Posterior vena cava (tissue), 2 donors: ENCODE measurements at regions of chr3 and their contacts with region 1.

Region 1: GRCh38 chr3:150216041-150216811 is 191.9 kb upstream of the TSC22D2 start:
- DNase-seq: no peak

Region 2: DNA sequence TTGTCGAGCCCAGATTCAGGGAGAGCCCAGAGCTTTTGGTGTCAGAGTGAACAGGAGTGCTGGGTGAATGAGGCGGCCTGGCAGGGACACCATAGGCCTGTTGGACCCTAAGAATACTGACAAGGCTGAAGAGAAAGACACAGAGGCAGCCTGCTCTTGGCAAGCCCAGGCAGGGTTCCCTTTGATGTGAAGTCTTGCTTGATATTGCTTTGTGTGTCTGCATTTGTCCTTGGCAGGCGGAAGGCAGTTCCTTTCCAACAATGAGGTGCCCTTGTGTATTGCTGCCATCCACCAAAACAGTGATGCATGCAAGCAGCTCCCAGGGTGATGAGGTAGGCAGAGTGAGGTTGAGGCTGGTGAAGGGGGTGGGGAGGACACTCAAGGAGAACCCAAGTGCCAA is 39.2 kb after region 1 on chr3:
- intact Hi-C with region 1: no loop called
- DNase-seq: no peak

Region 3: DNA sequence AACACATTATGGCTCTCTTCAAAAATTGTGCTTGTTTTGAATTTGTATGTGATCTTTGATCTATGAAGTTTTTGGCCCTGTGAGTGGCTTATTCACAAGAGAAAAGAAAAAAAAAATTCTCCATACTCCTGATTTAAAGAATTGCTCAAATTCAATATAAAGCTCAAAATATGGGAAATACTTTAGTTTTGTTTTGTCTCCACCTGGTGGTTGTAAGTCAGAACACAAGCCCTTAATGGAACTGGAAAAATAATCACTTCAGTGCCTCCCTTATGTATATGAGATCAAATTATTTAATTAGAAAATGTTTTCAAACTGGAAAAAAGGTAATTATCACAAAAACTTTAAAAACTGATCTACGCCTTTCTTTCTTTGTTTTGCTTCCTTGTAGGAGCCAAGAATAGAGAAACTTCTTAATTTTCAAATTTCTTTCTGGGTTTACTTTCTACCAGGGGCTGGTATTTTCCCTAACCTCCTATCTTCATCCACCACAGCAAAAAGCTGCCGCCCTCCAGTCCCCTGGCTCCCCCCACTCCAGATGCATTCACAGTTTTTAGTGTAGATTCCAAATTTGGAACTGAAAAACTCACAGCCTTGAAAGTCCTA is 279.4 kb after region 1 on chr3:
- intact Hi-C with region 1: loop called in 1 of 2 experiments (anchors 5 kb)
- DNase-seq: no peak